Activated CD4-positive, alpha-beta memory T cell treated with anti-CD3 and anti-CD28 coated beads for 36 hours (primary cell): ENCODE measurements at regions of chr4 and their contacts with region 1.

Region 1: GRCh38 chr4:75724066-75724866 is at the start of gene USO1:
- DNase-seq: peak; percentile 100
- H3K4me3 Mint-ChIP-seq: peak within 1 kb of the TSS; percentile 96
- H3K27ac Mint-ChIP-seq: peak within 1 kb of the TSS; percentile 98
- H3K4me1 Mint-ChIP-seq: peaks cover 51% of the 10 kb centered on the region
- H3K27me3 Mint-ChIP-seq: no peaks in the 10 kb centered on the region
- total RNA-seq, gene USO1: 57.3 to 59.0 TPM

Region 2: GRCh38 chr4:75514131-75514948 is 209.9 kb before region 1 on chr4 and contains the starts of genes RCHY1 and THAP6:
- CTCF ChIA-PET with region 1: interaction called, 9 read pairs
- POLR2A ChIA-PET with region 1: interaction called, 7 read pairs
- intact Hi-C with region 1: loop called (anchors 1 kb)
- DNase-seq: peak; percentile 95
- H3K4me3 Mint-ChIP-seq: no peak within 1 kb of the TSS
- H3K27ac Mint-ChIP-seq: peak within 1 kb of the TSS; percentile 98
- H3K4me1 Mint-ChIP-seq: peaks cover 52% of the 10 kb centered on the region
- H3K27me3 Mint-ChIP-seq: no peaks in the 10 kb centered on the region
- total RNA-seq, gene RCHY1: 30.0 to 32.4 TPM
- total RNA-seq, gene THAP6: 19.4 to 20.7 TPM

Region 3: DNA sequence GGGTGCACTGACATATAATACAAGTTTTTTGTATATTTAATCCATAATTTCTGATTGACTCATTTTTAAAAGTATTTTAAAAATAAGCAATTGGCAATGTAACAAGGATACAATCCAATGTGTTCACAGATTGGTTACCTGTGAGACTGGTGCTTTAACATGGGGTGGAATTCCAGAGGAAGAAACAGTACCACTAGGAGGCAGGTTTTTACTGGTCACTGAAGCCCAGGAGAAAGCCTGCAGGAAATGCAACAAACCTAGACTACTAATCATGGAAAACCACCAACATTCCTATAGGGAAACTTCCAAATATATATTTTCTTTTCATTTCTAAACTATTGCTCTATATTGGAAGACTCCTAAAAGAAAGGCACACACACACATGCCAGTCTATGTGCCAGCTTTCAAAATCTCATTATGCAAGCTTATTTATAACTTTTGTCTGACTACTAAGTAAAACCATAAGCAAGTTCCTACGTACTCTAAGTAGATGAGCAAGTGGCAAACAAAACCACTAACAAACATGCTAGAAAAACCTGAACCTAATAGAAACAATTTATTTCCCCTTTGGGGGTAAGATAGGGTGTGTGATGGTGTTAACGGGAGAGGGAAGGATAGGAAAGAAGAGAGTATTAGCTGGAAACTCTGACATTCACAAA is 70.3 kb before region 1 on chr4:
- CTCF ChIA-PET with region 1: interaction called, 22 read pairs
- POLR2A ChIA-PET with region 1: interaction called, 12 read pairs
- intact Hi-C with region 1: loop called (anchors 1 kb)
- DNase-seq: no peak
- H3K4me3 Mint-ChIP-seq: no peak overlapping the region
- H3K27ac Mint-ChIP-seq: peak overlapping the region; percentile 82
- H3K4me1 Mint-ChIP-seq: peaks cover 43% of the 10 kb centered on the region
- H3K27me3 Mint-ChIP-seq: no peaks in the 10 kb centered on the region

Region 4: GRCh38 chr4:75698162-75698962 is 25.9 kb before region 1 on chr4:
- CTCF ChIA-PET with region 1: interaction called, 10 read pairs
- POLR2A ChIA-PET with region 1: interaction called, 5 read pairs
- intact Hi-C with region 1: loop called (anchors 1 kb)
- DNase-seq: peak; percentile 48
- H3K4me3 Mint-ChIP-seq: no peak overlapping the region
- H3K27ac Mint-ChIP-seq: peak overlapping the region; percentile 64
- H3K4me1 Mint-ChIP-seq: peaks cover 23% of the 10 kb centered on the region
- H3K27me3 Mint-ChIP-seq: no peaks in the 10 kb centered on the region

Region 5: DNA sequence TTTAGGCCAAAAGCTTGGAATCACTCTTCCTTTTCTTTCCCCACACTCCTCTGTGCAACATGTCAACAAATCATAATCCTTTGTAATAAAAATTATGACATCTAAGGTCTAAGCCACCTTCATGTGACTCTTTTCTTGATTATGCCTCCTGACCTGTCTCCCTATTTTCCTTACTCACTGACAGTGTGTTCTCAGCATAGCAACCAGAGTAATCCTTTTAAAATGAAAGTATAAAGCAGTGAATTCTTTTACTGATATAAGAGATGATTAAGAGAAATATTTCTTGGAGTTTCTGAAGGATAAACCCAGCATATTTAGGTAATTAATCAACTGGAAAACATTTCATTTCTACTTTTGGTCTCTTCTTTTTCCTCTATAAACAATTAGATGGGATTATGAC is 44.8 kb after region 1 on chr4:
- CTCF ChIA-PET with region 1: no interaction called
- POLR2A ChIA-PET with region 1: no interaction called
- intact Hi-C with region 1: no loop called
- DNase-seq: no peak
- H3K4me3 Mint-ChIP-seq: no peak overlapping the region
- H3K27ac Mint-ChIP-seq: no peak overlapping the region
- H3K4me1 Mint-ChIP-seq: no peaks in the 10 kb centered on the region
- H3K27me3 Mint-ChIP-seq: no peaks in the 10 kb centered on the region

Region 6: GRCh38 chr4:75849461-75849860 is 125.2 kb after region 1 on chr4:
- CTCF ChIA-PET with region 1: interaction called, 12 read pairs
- POLR2A ChIA-PET with region 1: interaction called, 6 read pairs
- intact Hi-C with region 1: loop called (anchors 1 kb)
- DNase-seq: peak; percentile 12
- H3K4me3 Mint-ChIP-seq: no peak overlapping the region
- H3K27ac Mint-ChIP-seq: no peak overlapping the region
- H3K4me1 Mint-ChIP-seq: peaks cover 14% of the 10 kb centered on the region
- H3K27me3 Mint-ChIP-seq: peaks cover 7% of the 10 kb centered on the region

Region 7: DNA sequence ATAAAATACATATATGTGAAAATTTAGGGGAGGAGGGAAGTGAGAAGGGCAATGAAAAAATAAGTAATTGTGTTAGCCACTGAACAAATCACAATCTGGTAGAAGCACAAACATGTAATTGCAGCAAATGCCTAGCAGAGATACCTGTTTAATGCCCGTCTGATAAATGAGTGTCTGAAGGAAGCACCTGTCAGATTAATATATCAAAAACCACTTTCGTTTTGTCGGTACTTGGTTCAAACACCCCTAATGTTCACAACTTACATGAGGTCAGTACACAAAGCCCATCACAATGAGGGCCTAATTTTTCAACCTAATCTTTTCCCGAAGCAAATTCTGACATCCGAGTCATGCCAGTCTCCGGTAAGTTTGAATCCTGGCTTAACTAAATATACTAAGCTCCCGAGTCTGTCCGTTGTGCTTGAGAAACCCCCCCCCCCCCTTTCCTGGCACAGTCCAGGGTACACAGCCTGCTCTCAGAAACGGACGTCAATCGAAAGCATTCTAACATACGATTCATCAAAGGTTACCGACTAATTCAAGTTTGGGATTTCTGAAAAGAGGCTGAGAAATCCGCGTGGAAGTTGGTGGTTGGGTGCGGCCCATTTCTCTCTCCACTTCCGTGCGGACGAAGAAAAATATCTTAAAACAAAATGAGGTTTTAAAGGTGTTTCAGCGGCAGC is 265.7 kb after region 1 on chr4:
- CTCF ChIA-PET with region 1: no interaction called
- POLR2A ChIA-PET with region 1: no interaction called
- intact Hi-C with region 1: loop called (anchors 5 kb)
- DNase-seq: no peak
- H3K4me3 Mint-ChIP-seq: peak overlapping the region; percentile 85
- H3K27ac Mint-ChIP-seq: peak overlapping the region; percentile 57
- H3K4me1 Mint-ChIP-seq: peaks cover 29% of the 10 kb centered on the region
- H3K27me3 Mint-ChIP-seq: peaks cover 3% of the 10 kb centered on the region

Region 8: GRCh38 chr4:77075869-77076799 is 1351.9 kb after region 1 on chr4 and contains the start of gene CCNI:
- CTCF ChIA-PET with region 1: no interaction called
- POLR2A ChIA-PET with region 1: no interaction called
- intact Hi-C with region 1: loop called (anchors 10 kb)
- DNase-seq: peak; percentile 94
- H3K4me3 Mint-ChIP-seq: peak within 1 kb of the TSS; percentile 93
- H3K27ac Mint-ChIP-seq: no peak within 1 kb of the TSS
- H3K4me1 Mint-ChIP-seq: peaks cover 26% of the 10 kb centered on the region
- H3K27me3 Mint-ChIP-seq: no peaks in the 10 kb centered on the region
- total RNA-seq, gene CCNI: 259 to 264 TPM